Pancreas (tissue), 10 donors: ENCODE measurements at regions of chr9 and their contacts with region 1.

Region 1: DNA sequence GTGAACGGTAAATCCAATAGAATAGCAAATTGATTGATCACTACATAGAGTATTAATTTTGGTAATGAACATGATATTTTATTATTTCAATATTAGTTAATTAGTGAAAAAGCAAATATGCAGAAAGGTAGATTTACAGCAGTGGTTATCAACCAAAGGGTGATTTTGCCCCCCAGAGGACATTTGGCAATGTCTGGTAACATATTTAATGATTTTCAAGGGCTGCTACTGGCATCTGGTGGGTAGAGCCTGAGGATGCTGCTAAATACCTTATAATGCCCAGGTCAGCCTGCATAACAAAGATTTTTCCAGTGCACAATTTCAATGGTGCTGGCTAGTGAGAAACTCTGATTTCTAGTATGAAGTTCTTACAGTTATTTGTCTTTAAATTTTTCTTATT is 1313.7 kb downstream of the PTPRD start:
- DNase-seq: no peak
- ATAC-seq: no peak
- H3K4me3 ChIP-seq: no peak overlapping the region
- H3K27ac ChIP-seq: no peak overlapping the region
- H3K4me1 ChIP-seq: no peaks in the 10 kb centered on the region
- H3K27me3 ChIP-seq: no peaks in the 10 kb centered on the region
- CTCF ChIP-seq: no peak

Region 2: GRCh38 chr9:9246726-9247125 is 52.4 kb before region 1 on chr9:
- intact Hi-C with region 1: loop called in 1 of 3 experiments (anchors 10 kb)
- DNase-seq: no peak
- ATAC-seq: no peak
- H3K4me3 ChIP-seq: no peak overlapping the region
- H3K27ac ChIP-seq: no peak overlapping the region
- H3K4me1 ChIP-seq: no peaks in the 10 kb centered on the region
- H3K27me3 ChIP-seq: no peaks in the 10 kb centered on the region
- CTCF ChIP-seq: no peak

Region 3: DNA sequence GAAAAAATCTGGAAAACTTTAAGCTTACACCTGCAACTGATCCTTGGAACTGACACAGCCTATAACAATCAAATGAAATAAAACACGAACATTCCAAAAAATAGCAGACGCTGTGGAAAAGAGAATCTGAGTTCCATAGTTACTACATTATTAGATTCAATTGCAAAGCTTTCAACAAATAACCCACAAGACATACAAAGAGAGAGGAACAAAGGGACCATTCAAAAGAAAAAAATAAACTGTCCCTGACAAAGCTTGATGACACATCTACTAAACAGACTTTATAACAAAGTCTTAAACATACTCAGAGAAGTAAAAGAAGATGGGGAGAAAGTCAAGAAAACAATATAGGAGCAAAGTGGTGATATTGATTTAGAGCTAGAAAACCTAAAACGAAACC is 190.0 kb after region 1 on chr9:
- intact Hi-C with region 1: no loop called
- DNase-seq: no peak
- ATAC-seq: no peak
- H3K4me3 ChIP-seq: no peak overlapping the region
- H3K27ac ChIP-seq: no peak overlapping the region
- H3K4me1 ChIP-seq: no peaks in the 10 kb centered on the region
- H3K27me3 ChIP-seq: no peaks in the 10 kb centered on the region
- CTCF ChIP-seq: no peak

Region 4: GRCh38 chr9:9499546-9499945 is 200.4 kb after region 1 on chr9:
- intact Hi-C with region 1: no loop called
- DNase-seq: no peak
- ATAC-seq: no peak
- H3K4me3 ChIP-seq: no peak overlapping the region
- H3K27ac ChIP-seq: no peak overlapping the region
- H3K4me1 ChIP-seq: no peaks in the 10 kb centered on the region
- H3K27me3 ChIP-seq: no peaks in the 10 kb centered on the region
- CTCF ChIP-seq: no peak